WTC11 (cell line): ENCODE measurements at regions of chr6 and their contacts with region 1.

Region 1: DNA sequence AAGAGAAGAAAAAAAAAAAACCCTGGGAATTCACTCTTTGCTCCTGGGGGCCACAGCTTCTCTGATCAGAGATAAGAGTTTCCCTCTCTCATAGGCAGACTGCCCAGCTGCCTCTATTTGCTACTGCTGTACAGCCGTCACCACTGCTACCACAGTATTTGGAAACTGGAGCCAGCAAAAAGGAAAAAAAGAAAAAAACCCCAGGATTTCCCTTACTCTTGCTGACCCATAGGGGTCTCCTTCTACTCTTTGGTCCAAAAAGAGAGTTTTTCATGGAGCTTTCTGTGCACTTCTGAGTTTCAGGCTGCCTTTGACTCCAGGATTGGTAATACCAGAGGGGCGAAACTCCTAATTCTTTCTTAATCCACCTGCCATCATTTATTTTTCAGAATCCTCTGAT is 89.7 kb downstream of the MDGA1 start:
- DNase-seq: no peak
- ATAC-seq: peak; percentile 72
- H3K4me3 Mint-ChIP-seq: no peak overlapping the region
- H3K27ac Mint-ChIP-seq: no peak overlapping the region
- H3K4me1 Mint-ChIP-seq: no peaks in the 10 kb centered on the region
- H3K27me3 Mint-ChIP-seq: peaks cover 3% of the 10 kb centered on the region; the same call in 1 of the 2 replicates
- CTCF ChIP-seq: peak; percentile 11; the same call in 1 of the 2 replicates

Region 2: GRCh38 chr6:37283671-37284151 is 324.2 kb before region 1 on chr6:
- CTCF ChIA-PET with region 1: no interaction called
- POLR2A ChIA-PET with region 1: no interaction called
- DNase-seq: no peak
- ATAC-seq: no peak
- H3K4me3 Mint-ChIP-seq: no peak overlapping the region
- H3K27ac Mint-ChIP-seq: no peak overlapping the region
- H3K4me1 Mint-ChIP-seq: 0 out of 2 replicates have a peak, but pooled peaks cover 5% of the 10 kb centered on the region
- H3K27me3 Mint-ChIP-seq: no peaks in the 10 kb centered on the region
- CTCF ChIP-seq: no peak

Region 3: DNA sequence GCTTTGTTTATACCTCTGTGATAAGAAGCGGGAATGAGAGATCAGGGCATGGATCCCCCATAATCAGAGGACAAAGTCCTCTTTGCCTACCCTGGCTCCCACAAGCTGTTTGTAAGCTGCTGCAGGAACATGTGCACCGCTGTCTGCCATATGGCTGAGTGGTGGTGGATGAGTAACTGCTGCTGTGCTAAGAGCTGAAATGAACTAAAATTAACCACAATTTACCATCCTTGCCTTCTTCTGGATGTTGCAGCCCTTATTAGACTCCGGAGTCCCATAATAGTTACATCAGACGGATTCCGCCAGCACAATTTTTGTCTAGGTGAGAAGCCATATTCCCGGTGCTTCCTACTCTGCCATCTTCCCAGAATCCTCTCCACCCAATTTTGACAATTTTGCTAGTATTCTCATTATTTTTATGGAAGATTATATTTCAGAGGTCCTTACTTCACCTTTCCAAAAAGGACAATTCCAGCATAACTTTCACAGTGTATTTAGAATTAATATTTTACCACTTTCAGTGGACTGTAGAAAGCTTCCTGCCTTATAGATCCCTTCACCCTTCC is 180.9 kb before region 1 on chr6:
- CTCF ChIA-PET with region 1: no interaction called
- POLR2A ChIA-PET with region 1: no interaction called
- DNase-seq: no peak
- ATAC-seq: no peak
- H3K4me3 Mint-ChIP-seq: no peak overlapping the region
- H3K27ac Mint-ChIP-seq: no peak overlapping the region
- H3K4me1 Mint-ChIP-seq: no peaks in the 10 kb centered on the region; the same call in 1 of the 2 replicates
- H3K27me3 Mint-ChIP-seq: peaks cover 12% of the 10 kb centered on the region
- CTCF ChIP-seq: no peak

Region 4: GRCh38 chr6:37587866-37588734 is 19.8 kb before region 1 on chr6:
- CTCF ChIA-PET with region 1: interaction called, 11 read pairs
- POLR2A ChIA-PET with region 1: no interaction called
- DNase-seq: peak; percentile 39
- ATAC-seq: peak; percentile 53
- H3K4me3 Mint-ChIP-seq: no peak overlapping the region
- H3K27ac Mint-ChIP-seq: no peak overlapping the region
- H3K4me1 Mint-ChIP-seq: peaks cover 14% of the 10 kb centered on the region
- H3K27me3 Mint-ChIP-seq: no peaks in the 10 kb centered on the region
- CTCF ChIP-seq: no peak

Region 5: GRCh38 chr6:37594895-37595294 is 13.0 kb before region 1 on chr6:
- CTCF ChIA-PET with region 1: interaction called, 11 read pairs
- POLR2A ChIA-PET with region 1: no interaction called
- DNase-seq: no peak
- ATAC-seq: peak; percentile 64
- H3K4me3 Mint-ChIP-seq: no peak overlapping the region
- H3K27ac Mint-ChIP-seq: no peak overlapping the region
- H3K4me1 Mint-ChIP-seq: peaks cover 18% of the 10 kb centered on the region
- H3K27me3 Mint-ChIP-seq: no peaks in the 10 kb centered on the region
- CTCF ChIP-seq: no peak

Region 6: DNA sequence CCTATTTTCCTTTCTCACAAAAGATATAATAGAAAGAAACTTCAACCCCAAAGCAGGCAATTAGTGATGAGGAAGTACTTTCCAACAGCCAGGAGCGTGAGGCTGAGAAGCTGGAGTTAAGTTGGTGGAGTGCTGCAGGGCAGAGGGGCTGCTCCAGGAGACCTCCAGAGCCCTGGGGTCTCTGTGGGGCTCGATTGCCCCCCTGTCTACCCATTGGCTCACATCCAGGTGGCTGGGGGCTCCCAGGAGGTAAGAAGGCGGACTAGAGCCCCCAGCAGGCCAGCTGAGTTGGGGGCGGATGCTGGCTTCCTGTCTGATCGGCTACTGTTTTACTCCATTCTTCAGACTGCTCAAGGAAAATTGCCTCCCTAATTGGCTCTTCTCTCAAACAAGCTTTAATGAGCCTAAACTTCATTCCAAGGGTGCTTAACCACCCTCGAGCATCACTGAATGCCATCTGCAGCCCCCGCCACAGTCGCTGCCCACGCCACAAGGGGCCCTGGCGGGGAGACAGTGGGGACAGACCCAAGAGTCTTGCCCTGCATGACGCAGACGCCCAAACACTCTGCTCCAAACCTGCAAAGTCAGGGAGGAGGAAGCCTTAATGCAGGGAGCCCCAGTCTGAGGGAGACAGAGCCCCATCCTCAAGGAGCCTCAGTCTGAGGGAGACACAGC is 11.1 kb after region 1 on chr6:
- CTCF ChIA-PET with region 1: interaction called, 14 read pairs
- POLR2A ChIA-PET with region 1: no interaction called
- DNase-seq: no peak
- ATAC-seq: peak; percentile 34; the same call in 1 of the 2 replicates
- H3K4me3 Mint-ChIP-seq: no peak overlapping the region
- H3K27ac Mint-ChIP-seq: no peak overlapping the region
- H3K4me1 Mint-ChIP-seq: peaks cover 7% of the 10 kb centered on the region; the same call in 1 of the 2 replicates
- H3K27me3 Mint-ChIP-seq: peaks cover 3% of the 10 kb centered on the region
- CTCF ChIP-seq: no peak